ENCODE measurements at regions of chr2 and their contacts with region 1.

Region 1: DNA sequence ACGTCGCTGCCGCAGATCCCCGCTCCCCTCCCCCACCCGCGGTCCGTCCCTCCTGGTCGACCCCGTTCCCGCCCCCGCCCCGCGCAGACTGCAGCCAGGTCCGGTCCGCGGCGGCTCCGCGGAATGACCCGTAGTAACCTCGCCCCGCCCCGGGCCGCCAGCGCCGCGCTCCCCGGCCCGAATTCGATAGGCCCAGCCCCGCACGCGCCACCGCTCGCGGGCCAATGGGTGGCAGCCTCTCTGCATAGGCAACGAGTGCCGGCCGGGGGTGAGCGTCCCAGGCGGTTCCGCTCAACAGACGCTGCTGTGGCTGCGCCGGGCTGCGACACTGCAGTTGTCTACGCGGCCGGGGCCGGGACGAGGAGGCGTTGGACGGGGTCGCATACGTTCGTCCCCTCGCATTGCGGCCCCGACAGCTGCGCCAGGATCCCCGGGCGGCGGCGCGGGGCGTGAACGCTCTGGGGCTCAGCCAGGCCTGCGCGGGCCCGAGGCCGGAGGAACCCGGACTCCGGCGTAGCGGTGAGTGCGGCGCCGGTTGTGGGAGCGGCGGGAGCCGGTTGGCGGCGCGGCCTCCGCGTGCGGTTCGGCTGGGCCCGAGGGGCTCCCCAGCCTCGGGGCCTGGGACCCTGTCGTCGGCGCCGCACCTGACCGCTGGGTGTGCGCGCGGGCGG is at the start of gene ACSL3:
- DNase-seq: peak; percentile 97
- ATAC-seq: peak; percentile 98
- total RNA-seq, gene ACSL3: 70.5 TPM

Region 2: DNA sequence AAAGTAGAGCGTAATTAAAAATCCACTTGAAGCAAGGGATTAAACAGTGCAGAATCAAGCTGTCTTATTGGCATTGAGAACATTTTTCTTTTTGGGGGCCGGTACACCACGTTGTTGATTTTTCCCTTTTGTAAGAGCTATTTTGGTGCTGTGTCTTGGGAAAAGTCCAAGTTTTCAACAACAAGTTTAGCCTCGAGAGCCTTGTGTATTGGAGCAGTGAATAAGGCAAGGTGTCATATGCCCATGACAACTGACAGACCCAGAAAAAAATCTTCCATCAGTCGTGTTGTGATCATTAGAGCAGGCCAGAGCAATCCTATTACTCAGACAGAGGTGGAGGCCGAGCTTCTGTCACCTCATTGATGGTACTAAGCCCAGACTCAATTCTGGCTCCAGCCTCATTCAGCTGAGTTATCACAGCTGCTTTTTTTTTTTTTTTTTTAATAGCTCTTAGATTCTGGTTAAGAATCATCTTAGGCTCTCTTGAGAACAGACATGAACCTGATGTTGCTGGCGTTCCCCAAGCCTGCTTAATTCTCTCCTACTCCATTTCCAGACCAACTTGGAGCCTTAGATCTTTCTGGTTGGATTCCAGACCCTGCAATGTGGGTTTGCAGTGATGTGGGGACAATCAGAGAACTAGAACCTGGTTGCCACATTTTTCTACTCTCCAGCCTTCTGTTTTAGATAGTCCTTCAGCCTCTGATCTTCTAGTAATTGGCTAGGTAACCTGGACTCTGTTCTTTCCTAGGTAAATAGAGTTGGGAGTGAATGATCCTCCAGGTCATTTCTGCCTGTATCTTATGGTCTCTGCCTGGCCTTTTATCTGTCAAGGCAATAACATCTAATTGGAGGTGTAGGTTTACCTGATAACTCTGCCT is 146.3 kb before region 1 on chr2:
- intact Hi-C with region 1: loop called (anchors 5 kb)
- DNase-seq: no peak
- ATAC-seq: peak; percentile 93